B cell (primary cell): ENCODE measurements at regions of chr1 and their contacts with region 1.

Region 1: DNA sequence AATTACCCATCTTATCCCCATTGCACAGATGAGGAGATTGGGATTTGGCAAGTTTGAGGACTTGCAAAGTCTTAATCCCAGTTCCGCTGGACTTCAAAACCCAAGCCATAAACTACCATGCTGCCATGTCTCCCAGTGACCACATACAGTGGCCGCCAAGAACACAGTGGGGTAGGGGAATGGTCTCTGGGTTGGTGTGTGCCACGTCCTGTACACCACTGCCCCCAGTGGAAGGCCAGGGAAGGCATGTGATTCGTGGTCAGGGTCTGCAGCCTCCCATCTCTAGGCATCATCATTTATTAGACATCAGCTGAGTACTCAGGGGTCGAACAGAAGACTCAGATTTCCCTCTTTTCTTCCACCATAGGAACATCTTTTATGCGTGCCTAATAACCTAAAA is 76.0 kb downstream of the MAN1C1 start:
- DNase-seq: peak; percentile 28
- ATAC-seq: no peak
- H3K4me3 ChIP-seq: no peak overlapping the region
- H3K4me3 Mint-ChIP-seq: no peak overlapping the region
- H3K27ac ChIP-seq: no peak overlapping the region
- H3K27ac Mint-ChIP-seq: no peak overlapping the region
- H3K4me1 ChIP-seq: no peaks in the 10 kb centered on the region
- H3K4me1 Mint-ChIP-seq: no peaks in the 10 kb centered on the region
- H3K27me3 ChIP-seq: peaks cover 0 to 5% (median 0%) of the 10 kb centered on the region in 4 experiments
- H3K27me3 Mint-ChIP-seq: peaks cover 16% of the 10 kb centered on the region
- CTCF ChIP-seq: peak; percentile 48

Region 2: DNA sequence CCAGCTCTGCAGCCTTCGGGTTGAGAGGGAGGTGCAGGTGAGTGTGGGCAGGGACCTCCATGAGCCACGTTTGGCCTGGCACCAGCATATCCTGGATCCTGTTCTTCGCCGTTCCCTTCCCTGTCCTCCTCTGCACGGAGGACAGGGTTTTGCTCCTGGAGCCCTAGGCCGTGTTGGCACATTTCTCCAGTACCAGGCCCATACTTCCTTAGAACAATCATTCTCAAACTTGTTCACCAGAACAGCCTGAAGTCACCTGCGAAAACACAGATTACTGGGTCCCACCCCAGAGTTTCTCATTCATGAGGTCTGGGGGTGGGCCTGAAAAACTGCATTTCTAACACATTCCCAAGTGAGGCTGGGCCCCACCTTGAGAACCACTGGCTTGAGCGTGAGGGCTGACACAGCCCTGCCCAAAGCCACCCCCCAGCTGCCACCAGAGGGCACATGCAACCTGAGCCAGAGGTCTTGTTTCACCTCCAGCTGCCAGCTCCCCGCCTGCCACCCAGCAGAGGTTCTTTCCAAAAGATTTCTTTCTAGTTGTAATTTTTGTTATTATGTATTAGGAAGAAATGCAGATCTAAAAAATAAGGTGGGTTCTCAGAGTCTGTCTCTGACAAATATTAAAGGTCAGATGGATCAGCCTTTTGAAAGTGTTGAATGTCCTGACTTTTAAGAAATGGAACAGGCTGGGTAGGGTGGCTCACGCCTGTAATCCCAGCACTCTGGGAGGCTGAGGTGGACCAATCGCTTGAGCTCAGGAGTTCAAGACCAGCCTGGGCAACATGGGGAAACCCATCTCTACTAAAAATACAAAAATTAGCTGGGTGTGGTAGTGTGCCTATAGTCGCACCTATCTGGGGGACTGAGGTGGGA is 188.8 kb before region 1 on chr1:
- CTCF ChIA-PET with region 1: interaction called, 10 read pairs
- POLR2A ChIA-PET with region 1: no interaction called
- intact Hi-C with region 1: loop called (anchors 2 kb)
- DNase-seq: peak; percentile 54
- ATAC-seq: peak; percentile 61
- H3K4me3 ChIP-seq: no peak overlapping the region
- H3K4me3 Mint-ChIP-seq: no peak overlapping the region
- H3K27ac ChIP-seq: no peak overlapping the region
- H3K27ac Mint-ChIP-seq: no peak overlapping the region
- H3K4me1 ChIP-seq: peaks cover 6 to 10% of the 10 kb centered on the region in 2 donors
- H3K4me1 Mint-ChIP-seq: peaks cover 10% of the 10 kb centered on the region
- H3K27me3 ChIP-seq: no peaks in the 10 kb centered on the region
- H3K27me3 Mint-ChIP-seq: peaks cover 3% of the 10 kb centered on the region
- CTCF ChIP-seq: peak; percentile 59